Psoas muscle (tissue), 8 donors: ENCODE measurements at regions of chr3 and their contacts with region 1.

Region 1: GRCh38 chr3:147410526-147411237 is 1.5 kb downstream of the ZIC1 start:
- DNase-seq: peak in 1 of 2 donors; percentile 73
- ATAC-seq: peak; percentile 62 to 70 (median 68)
- H3K4me3 ChIP-seq: peak overlapping the region; percentile 75
- H3K27ac ChIP-seq: peak overlapping the region; percentile 73
- H3K4me1 ChIP-seq: peaks cover 10% of the 10 kb centered on the region
- H3K27me3 ChIP-seq: peaks cover 0 to 76% (median 10%) of the 10 kb centered on the region in 3 donors
- CTCF ChIP-seq: no peak

Region 2: GRCh38 chr3:148075763-148076716 is 665.4 kb after region 1 on chr3:
- intact Hi-C with region 1: loop called in 1 of 2 experiments (anchors 5 kb)
- DNase-seq: no peak
- ATAC-seq: peak in 2 of 4 donors; percentile 64 to 75
- H3K4me3 ChIP-seq: no peak overlapping the region
- H3K27ac ChIP-seq: no peak overlapping the region
- H3K4me1 ChIP-seq: no peaks in the 10 kb centered on the region
- H3K27me3 ChIP-seq: no peaks in the 10 kb centered on the region
- CTCF ChIP-seq: peak; percentile 72